Activated CD4-positive, alpha-beta memory T cell treated with anti-CD3 and anti-CD28 coated beads, Interleukin-2, amount 10 ng/mL, durations not matched to agents 7 days and 5 days (primary cell): ENCODE measurements at regions of chr7 and their contacts with region 1.

Region 1: DNA sequence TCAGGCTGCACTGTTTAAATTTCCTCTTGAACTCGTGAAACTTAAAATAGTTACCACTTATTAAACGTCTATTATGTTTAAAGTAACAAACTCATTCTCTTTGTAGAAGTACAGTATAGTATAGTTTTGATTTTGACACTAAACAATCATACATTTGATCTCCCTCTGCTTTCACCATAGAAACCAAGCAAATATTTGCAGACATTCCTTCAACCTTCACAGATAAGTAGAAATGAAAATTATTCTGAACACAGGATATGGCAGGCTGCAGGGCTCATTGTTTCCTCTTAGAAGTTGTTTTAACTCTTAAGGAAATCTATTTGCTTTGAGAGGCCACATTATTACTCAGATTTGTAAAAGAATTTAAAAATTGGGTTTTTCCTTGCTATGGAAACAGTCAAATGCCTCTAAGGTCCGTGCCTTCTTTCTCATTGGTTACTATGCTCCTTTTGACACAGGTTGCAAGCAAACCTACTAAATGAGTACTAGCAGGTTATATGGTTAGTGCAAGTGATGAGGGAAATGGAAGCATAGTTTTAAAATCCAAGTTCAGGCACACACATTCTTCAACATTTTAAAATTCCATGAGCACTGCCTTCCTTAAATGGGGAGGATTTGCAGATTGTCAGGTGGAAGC is 92.8 kb upstream of the FAM133B start:
- DNase-seq: no peak
- H3K4me3 Mint-ChIP-seq: no peak overlapping the region
- H3K27ac Mint-ChIP-seq: peak overlapping the region; percentile 86
- H3K4me1 Mint-ChIP-seq: peaks cover 87% of the 10 kb centered on the region
- H3K27me3 Mint-ChIP-seq: no peaks in the 10 kb centered on the region

Region 2: DNA sequence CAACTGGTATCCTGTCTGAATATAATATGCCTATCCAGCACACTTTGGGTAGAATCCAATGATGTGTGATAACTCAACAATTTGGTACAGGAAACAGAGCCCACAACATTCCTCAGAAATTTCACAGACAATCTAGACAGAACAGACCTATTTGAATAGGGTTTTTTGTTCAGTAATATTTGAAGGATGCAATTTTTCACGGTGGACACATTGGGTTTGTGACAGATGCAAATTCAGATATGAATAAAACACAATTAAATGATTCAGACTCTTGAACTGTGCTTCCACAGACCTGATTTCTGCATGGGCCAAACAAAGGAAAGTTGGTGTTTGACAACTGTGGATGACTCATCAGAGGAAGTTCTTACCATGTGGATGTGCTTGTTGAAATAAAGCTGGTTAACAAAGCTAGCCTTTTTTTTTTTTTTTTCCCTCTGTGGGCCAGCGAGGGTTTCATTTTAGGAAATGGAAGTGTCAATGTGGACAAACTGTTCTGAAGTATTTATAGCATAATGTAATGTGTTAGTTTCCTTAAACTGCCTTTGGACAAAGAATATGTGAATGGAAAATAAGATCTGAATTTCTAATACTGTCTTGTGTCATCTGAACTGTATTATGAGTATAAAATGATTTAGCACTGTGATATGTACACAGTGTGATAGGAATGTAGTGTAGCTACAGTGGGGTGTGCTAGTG is 49.7 kb before region 1 on chr7:
- CTCF ChIA-PET with region 1: interaction called, 3 read pairs
- POLR2A ChIA-PET with region 1: interaction called, 12 read pairs
- DNase-seq: no peak
- H3K4me3 Mint-ChIP-seq: peak overlapping the region; percentile 16
- H3K27ac Mint-ChIP-seq: peak overlapping the region; percentile 80
- H3K4me1 Mint-ChIP-seq: peaks cover 78% of the 10 kb centered on the region
- H3K27me3 Mint-ChIP-seq: no peaks in the 10 kb centered on the region

Region 3: DNA sequence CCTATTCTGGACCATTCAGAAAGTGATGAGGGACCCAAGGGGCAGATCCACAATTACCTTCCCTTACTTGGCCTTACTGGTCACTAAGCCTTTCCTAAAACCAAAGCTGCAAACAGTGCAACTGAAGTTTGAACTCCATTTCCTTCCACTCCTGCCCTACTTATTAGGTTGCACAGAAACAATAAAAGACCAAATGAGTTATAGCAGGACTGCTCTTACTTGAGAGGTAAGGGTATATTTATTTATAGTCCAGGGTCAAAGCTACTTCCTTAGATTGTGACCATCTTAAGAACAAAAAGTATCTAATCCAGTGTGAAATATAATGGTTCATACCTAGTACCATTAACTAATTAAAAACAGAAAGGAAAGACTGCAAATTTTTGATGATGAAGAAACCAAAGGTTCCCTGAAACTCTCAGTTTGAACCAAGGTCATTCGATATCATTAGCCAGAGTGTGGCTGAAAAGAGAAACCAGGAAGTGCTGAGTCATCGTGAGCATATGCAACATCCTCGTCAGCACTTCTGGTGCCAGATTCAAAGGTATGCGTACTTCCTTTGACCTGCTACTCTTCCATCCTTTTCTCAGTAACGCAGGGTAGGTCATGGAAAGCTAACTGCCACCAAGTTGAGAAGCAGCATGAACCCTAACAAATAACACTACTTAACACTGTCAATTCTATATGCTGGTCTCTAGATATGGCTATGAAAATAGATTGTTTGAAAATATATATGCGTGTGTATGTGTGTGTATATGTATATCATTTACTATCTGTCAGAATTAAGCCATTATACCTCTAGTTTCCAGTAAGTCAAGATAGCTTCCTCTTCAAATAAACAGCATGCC is 126.6 kb after region 1 on chr7:
- CTCF ChIA-PET with region 1: no interaction called
- POLR2A ChIA-PET with region 1: interaction called, 16 read pairs
- DNase-seq: peak; percentile 83
- H3K4me3 Mint-ChIP-seq: peak overlapping the region; percentile 65
- H3K27ac Mint-ChIP-seq: peak overlapping the region; percentile 95
- H3K4me1 Mint-ChIP-seq: peaks cover 85% of the 10 kb centered on the region
- H3K27me3 Mint-ChIP-seq: no peaks in the 10 kb centered on the region